ENCODE measurements at regions of chr9 and their contacts with region 1.

Region 1: DNA sequence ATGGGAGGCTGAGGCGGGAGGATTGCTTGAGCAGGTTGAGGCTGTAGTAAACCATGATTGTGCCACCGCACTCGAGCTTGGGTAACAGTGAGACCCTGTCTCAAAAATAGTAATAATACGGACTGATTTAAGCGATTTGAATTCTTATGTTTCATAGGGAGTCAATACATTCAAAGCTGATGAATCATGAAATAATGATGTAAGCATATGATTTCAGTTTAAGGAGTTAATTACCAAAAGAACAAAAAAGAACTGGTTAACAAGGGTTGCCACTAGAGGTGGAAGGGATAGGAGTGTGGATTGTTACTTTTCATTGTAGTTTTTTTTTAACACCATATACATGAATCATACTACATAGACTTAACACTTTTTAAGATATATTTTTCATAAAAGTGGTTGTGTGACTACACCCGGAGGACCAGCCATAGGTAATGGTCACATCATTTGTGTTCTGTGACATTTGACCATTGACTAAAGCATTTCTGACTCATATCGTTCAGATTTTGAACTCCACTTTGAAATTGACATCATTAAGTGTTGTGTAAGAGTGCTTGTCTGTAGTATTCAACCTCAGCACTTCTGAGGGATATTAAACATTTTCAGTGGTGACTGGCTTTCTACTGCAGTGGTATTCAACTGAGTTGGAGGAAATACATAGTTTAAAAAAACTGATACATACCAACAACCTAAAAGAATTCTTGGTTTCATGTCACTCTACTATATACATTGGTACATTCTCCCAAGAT is 7.0 kb downstream of the TRMT10B start:
- DNase-seq: no peak
- ATAC-seq: no peak
- H3K4me3 ChIP-seq: no peak overlapping the region
- H3K27ac ChIP-seq: no peak overlapping the region
- H3K4me1 ChIP-seq: no peaks in the 10 kb centered on the region
- H3K27me3 ChIP-seq: no peaks in the 10 kb centered on the region
- CTCF ChIP-seq: no peak
- EP300 ChIP-seq: no peak
- POLR2A ChIP-seq: no peak
- RAD21 ChIP-seq: no peak

Region 2: DNA sequence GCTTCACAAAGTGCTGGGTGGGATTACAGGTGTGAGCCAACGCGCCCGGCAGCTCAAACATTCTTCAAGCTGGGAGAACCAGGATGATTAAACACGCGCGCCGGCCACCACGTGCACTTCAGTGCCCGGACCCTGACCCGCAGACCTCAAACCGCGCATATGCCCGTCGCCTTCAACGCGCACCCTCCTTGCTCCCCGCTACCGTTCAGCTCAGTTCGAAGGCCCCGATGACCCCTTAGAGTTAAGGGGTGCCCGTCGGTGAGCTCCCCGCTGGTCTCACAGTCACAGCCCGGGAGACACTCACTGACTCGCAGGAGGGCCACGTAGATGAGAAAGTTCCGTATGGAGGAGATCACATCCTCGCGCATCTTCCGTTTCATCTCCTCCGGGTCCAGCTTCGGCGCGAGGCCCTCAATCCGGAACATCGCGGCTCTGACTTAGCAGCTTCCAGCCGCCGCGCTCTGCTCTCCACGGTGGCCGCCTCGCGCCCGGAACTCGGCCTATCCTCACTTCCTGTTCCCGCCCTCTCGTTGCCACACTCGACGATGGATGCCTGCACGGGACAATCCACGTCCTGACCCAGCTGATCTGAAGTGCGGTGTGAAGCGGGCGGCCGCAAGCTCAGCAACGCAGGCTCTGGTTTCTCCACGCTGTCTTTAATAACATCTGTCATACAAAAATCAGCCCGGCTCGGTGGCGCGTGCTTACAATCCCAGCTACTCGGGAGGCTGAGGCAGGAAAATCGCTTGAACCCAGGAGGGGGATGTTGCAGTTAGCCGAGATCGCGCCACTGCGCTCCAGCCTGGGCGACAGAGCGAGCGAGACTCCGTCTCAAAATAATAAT is 168.3 kb before region 1 on chr9 and contains the start of gene TOMM5:
- CTCF ChIA-PET with region 1: no interaction called
- POLR2A ChIA-PET with region 1: no interaction called
- in situ Hi-C with region 1: no loop called
- intact Hi-C with region 1: loop called (anchors 5 kb)
- DNase-seq: peak; percentile 88 to 97 (median 90)
- ATAC-seq: peak; percentile 92
- H3K4me3 ChIP-seq: peak within 1 kb of the TSS; percentile 57
- H3K27ac ChIP-seq: peak within 1 kb of the TSS; percentile 87
- H3K4me1 ChIP-seq: peaks cover 20 to 31% of the 10 kb centered on the region in 2 experiments
- H3K27me3 ChIP-seq: no peaks in the 10 kb centered on the region
- CTCF ChIP-seq: no peak; a peak in 1 of 6 replicates
- EP300 ChIP-seq: peak; percentile 52
- POLR2A ChIP-seq: peak; percentile 99
- RAD21 ChIP-seq: no peak
- polyA plus RNA-seq, gene TOMM5: 1,739 to 1,742 TPM

Region 3: DNA sequence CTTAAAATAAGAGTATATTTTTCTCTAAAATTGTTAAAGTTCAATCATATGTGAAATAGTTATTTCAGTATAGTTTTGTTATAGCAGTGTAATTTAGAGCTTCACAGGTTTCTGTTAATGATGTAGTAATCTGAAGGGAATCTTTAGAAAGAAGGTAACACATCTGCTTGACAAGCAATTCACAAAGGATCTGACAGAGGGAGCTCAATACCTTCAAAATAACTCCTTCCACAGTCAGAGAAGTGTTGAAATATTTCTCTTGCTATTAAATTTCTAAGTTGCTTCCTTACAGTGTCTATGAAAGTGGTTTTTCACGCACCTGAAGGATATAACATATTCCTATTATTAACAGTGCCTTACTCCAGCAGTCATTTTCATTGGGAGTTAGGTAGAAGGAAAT is 98.5 kb after region 1 on chr9:
- CTCF ChIA-PET with region 1: no interaction called
- POLR2A ChIA-PET with region 1: no interaction called
- in situ Hi-C with region 1: no loop called
- intact Hi-C with region 1: no loop called
- DNase-seq: peak in 2 of 4 experiments; percentile 16 to 19
- ATAC-seq: peak; percentile 57
- H3K4me3 ChIP-seq: no peak overlapping the region
- H3K27ac ChIP-seq: no peak overlapping the region
- H3K4me1 ChIP-seq: no peaks in the 10 kb centered on the region
- H3K27me3 ChIP-seq: no peaks in the 10 kb centered on the region
- CTCF ChIP-seq: peak in 2 of 3 experiments; percentile 17 to 44; a peak in 3 of 6 replicates
- EP300 ChIP-seq: no peak
- POLR2A ChIP-seq: no peak
- RAD21 ChIP-seq: peak in 1 of 2 experiments; percentile 56; a peak in 2 of 4 replicates